Aorta (tissue), 5 donors: ENCODE measurements at regions of chr15 and their contacts with region 1.

Region 1: DNA sequence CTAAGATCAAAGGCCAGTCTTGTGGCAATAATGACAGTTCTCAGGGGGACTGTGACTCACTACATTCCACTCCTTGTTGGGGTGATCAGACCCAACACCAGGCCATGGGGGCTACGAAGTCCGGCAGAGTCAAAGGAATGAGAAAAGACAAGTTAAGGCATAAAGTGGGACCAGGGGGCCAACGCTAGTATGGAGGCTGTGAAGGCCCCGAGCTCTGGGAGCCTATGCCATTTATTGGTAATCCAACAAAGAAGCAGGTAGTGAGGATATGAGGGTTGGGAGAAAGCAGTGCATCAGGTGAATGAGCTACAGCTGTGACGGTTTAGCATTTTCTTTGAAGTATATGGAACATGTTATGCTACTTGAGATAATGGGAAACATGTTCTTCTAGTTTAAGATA is 104.4 kb upstream of the C2CD4B start:
- DNase-seq: no peak
- ATAC-seq: no peak
- H3K4me3 ChIP-seq: no peak overlapping the region
- H3K27ac ChIP-seq: no peak overlapping the region
- H3K4me1 ChIP-seq: no peaks in the 10 kb centered on the region
- H3K27me3 ChIP-seq: no peaks in the 10 kb centered on the region

Region 2: GRCh38 chr15:62209322-62209721 is 60.2 kb before region 1 on chr15:
- intact Hi-C with region 1: loop called in 1 of 2 experiments (anchors 10 kb)
- DNase-seq: no peak
- ATAC-seq: no peak
- H3K4me3 ChIP-seq: no peak overlapping the region
- H3K27ac ChIP-seq: no peak overlapping the region
- H3K4me1 ChIP-seq: no peaks in the 10 kb centered on the region
- H3K27me3 ChIP-seq: no peaks in the 10 kb centered on the region